ENCODE measurements at regions of chr13 and their contacts with region 1.

Region 1: DNA sequence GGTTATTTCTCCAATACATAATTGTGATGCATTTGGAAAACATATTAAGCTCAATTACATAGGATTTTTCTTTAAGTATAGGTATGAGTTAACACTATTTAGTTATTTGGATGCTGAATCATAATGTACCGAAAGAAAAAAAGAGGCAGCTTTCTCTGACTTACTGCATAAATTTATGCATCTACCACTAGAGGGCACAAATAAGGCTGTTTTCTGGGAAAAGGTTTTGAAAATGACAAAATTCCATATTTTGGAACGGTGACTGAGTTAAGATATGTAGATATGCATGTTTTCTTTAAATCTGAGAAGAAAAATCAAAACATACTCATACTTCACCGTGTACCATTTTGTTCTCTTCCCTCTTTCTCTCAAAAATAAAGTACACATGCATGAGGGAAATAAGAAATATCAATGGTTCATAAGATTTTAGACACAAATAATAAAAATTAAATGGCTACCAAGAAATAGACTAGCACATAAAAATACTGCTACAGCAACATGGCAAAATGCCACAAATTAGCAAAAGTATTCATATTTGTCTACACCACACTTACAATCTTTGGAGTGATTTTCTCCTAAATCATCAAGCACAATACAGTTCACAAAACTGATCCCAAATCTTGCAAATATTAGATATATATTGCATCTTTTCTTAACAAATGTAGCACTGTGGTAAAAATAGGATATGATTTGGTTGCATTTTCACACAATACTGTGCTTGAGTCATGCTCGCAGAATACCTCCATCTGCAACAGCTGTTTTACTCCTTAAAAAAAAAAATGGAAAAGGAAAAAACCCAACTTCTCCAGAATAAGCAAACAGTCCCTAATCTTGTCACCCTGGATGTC is 260.0 kb downstream of the FGF14 start:
- DNase-seq: peak; percentile 31
- H3K4me3 Mint-ChIP-seq: no peak overlapping the region
- H3K27ac Mint-ChIP-seq: no peak overlapping the region
- H3K4me1 Mint-ChIP-seq: no peaks in the 10 kb centered on the region
- H3K27me3 Mint-ChIP-seq: no peaks in the 10 kb centered on the region
- CTCF ChIP-seq: peak; percentile 78

Region 2: DNA sequence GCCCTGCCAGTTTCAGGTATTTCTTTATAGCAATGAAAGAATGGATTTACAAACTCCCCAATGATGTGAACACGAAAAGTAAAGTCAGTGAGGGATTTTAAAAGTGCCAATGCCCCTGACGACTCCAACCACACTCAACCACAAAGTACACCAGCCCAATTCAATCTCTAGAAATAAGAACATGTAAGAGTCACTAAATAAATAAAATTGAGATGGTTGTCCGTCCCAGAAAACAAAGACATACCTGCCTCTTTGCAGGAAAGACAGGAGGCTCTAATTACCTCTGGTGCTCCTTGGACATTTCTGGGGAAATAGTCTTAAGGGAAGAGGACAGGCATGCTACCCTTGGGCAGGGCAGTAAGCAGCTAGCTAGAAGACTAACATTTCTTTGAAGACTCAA is 781.3 kb before region 1 on chr13:
- CTCF ChIA-PET with region 1: no interaction called
- POLR2A ChIA-PET with region 1: no interaction called
- intact Hi-C with region 1: no loop called
- DNase-seq: no peak
- H3K4me3 Mint-ChIP-seq: no peak overlapping the region
- H3K27ac Mint-ChIP-seq: no peak overlapping the region
- H3K4me1 Mint-ChIP-seq: no peaks in the 10 kb centered on the region
- H3K27me3 Mint-ChIP-seq: no peaks in the 10 kb centered on the region
- CTCF ChIP-seq: no peak

Region 3: DNA sequence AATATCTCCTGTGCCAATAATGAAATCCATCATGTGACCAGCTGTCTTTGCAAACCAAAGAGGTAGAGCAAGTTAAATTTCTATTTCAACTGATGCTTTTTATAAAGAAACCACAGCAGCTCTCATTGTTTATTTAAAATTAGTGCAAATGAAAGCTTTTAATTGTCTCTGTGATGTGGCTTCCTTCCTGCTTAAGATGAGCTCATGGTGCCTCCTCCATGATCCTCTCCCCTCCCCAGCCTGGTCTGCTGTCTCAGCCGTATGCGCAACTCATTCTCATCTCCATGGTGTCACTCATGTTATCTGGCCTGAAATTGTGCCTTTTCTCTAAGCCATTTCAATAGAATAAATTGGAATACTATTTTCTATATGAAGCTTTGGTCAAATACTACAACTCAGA is 10.6 kb before region 1 on chr13:
- CTCF ChIA-PET with region 1: interaction called, 14 read pairs
- POLR2A ChIA-PET with region 1: interaction called, 3 read pairs
- intact Hi-C with region 1: no loop called
- DNase-seq: no peak
- H3K4me3 Mint-ChIP-seq: no peak overlapping the region
- H3K27ac Mint-ChIP-seq: no peak overlapping the region
- H3K4me1 Mint-ChIP-seq: peaks cover 9% of the 10 kb centered on the region
- H3K27me3 Mint-ChIP-seq: no peaks in the 10 kb centered on the region
- CTCF ChIP-seq: no peak

Region 4: GRCh38 chr13:102152790-102153189 is 10.9 kb after region 1 on chr13:
- CTCF ChIA-PET with region 1: interaction called, 24 read pairs
- POLR2A ChIA-PET with region 1: interaction called, 3 read pairs
- intact Hi-C with region 1: no loop called
- DNase-seq: no peak
- H3K4me3 Mint-ChIP-seq: no peak overlapping the region
- H3K27ac Mint-ChIP-seq: no peak overlapping the region
- H3K4me1 Mint-ChIP-seq: no peaks in the 10 kb centered on the region
- H3K27me3 Mint-ChIP-seq: no peaks in the 10 kb centered on the region
- CTCF ChIP-seq: no peak

Region 5: DNA sequence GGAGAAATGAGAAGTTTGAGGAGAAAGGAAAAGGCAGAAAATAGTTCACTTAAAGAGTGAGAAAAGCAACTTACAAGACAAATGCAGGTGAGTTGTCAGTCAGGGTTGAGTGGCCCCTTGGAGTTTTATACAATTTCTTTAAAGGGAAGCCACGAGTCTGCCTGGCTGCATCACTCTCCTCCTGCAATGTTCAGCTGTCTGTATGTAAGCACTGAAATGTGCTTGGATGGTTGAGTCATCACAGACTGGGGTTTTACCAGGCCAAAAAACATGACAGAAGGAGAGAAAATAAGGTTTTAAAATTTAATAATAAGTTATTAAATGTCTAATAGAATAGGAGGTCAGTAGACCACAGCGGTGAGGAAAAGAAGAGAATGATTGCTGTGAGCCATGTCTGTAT is 311.0 kb after region 1 on chr13:
- CTCF ChIA-PET with region 1: interaction called, 22 read pairs
- POLR2A ChIA-PET with region 1: no interaction called
- intact Hi-C with region 1: loop called (anchors 1 kb)
- DNase-seq: no peak
- H3K4me3 Mint-ChIP-seq: no peak overlapping the region
- H3K27ac Mint-ChIP-seq: no peak overlapping the region
- H3K4me1 Mint-ChIP-seq: peaks cover 13% of the 10 kb centered on the region
- H3K27me3 Mint-ChIP-seq: no peaks in the 10 kb centered on the region
- CTCF ChIP-seq: no peak

Region 6: DNA sequence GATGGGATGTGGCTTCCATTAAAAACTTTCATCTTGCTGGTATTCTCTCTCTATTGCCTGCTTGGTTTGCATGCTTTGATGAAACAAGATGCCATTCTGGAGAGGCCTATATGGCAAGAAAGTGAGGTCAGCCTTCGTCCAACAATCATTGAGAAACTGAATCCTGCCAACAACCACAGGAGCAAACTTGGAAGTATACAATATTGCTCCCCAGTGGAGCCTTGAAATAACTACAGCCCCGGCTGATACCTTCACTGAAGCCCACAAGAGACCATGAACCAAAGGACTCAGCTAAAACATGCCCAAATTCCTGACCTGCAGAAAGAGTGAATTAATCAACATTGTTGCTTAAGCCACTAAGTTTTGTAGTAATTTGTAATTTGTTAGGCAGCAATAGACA is 342.5 kb after region 1 on chr13:
- CTCF ChIA-PET with region 1: interaction called, 3 read pairs
- POLR2A ChIA-PET with region 1: no interaction called
- intact Hi-C with region 1: loop called (anchors 1 kb)
- DNase-seq: peak; percentile 38
- H3K4me3 Mint-ChIP-seq: no peak overlapping the region
- H3K27ac Mint-ChIP-seq: no peak overlapping the region
- H3K4me1 Mint-ChIP-seq: no peaks in the 10 kb centered on the region
- H3K27me3 Mint-ChIP-seq: no peaks in the 10 kb centered on the region
- CTCF ChIP-seq: peak; percentile 21